Endothelial cell of umbilical vein (primary cell): ENCODE measurements at regions of chr22 and their contacts with region 1.

Region 1: GRCh38 chr22:35921777-35922176 is 106.8 kb downstream of the RBFOX2 start:
- DNase-seq: peak; percentile 90
- H3K4me3 ChIP-seq: no peak overlapping the region
- H3K27ac ChIP-seq: peak overlapping the region; percentile 35
- H3K4me1 ChIP-seq: peaks cover 10% of the 10 kb centered on the region
- H3K27me3 ChIP-seq: no peaks in the 10 kb centered on the region
- CTCF ChIP-seq: peak; percentile 48 to 53
- POLR2A ChIP-seq: no peak

Region 2: DNA sequence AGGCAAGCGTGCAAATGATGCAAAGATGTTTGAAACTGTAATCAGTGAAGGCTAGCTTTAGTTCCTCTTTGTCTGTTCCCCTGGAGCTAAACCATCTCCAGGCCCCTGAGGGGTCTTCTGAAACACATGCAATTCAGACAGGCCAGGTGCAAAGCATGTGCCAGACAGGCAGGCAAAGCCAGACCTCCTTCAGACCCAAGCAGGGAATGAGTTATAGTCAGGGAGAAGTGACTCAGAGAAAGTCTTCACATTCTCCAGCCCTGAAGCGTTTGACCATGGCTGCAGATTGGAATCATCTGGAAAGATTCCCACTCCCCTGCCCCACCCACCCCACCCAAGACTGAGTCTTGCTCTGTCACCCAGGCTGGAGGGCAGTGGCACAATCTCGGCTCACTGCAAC is 1042.8 kb before region 1 on chr22:
- CTCF ChIA-PET with region 1: no interaction called
- POLR2A ChIA-PET with region 1: no interaction called
- dilution Hi-C with region 1: no loop called
- intact Hi-C with region 1: no loop called
- DNase-seq: no peak
- H3K4me3 ChIP-seq: no peak overlapping the region
- H3K27ac ChIP-seq: no peak overlapping the region
- H3K4me1 ChIP-seq: no peaks in the 10 kb centered on the region
- H3K27me3 ChIP-seq: no peaks in the 10 kb centered on the region
- CTCF ChIP-seq: no peak
- POLR2A ChIP-seq: no peak

Region 3: DNA sequence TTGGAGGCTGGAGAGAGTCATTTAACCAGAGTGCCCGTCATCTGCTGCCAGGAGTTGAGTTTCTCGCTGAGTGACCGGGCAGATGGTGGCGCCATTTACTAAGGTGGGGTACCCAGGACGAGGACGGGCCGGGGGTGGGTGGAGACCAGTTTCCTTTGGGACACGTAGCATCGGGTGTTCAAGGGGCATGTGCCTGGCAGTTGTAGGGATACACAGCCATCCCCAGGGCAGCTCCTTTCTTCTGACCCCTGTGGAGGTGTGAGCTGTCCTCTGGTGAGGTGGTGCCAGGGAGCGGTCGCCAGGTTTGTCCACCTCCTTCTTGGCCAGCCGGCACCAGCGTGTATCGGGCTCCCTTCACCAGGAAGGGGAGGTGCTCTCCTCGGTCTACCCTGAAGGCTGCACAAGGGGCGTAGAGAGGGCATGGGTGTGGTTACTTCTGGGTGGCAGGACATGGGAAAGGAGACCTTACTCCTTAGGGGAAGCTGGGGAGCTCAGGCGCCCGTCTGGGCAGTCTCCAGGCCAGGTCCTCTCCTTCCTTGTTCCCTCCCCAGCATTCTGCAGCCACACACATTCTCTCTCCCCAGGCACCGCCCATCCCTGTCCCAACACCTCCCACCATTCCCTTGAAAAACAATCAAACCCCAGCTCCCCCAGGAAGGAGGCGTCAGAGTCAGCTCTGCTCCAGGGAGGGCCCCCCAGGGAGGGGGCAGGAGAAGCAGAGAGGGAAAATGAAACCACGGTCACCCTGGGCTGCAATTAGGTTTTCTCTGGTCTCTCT is 294.3 kb before region 1 on chr22:
- CTCF ChIA-PET with region 1: interaction called, 5 read pairs
- POLR2A ChIA-PET with region 1: no interaction called
- dilution Hi-C with region 1: no loop called
- intact Hi-C with region 1: loop called (anchors 1 kb)
- DNase-seq: peak; percentile 76
- H3K4me3 ChIP-seq: peak overlapping the region; percentile 27 to 58 (median 51)
- H3K27ac ChIP-seq: peak overlapping the region; percentile 30
- H3K4me1 ChIP-seq: peaks cover 8% of the 10 kb centered on the region
- H3K27me3 ChIP-seq: no peaks in the 10 kb centered on the region
- CTCF ChIP-seq: peak; percentile 48 to 54
- POLR2A ChIP-seq: peak; percentile 21

Region 4: GRCh38 chr22:35684270-35684700 is 237.5 kb before region 1 on chr22:
- CTCF ChIA-PET with region 1: interaction called, 11 read pairs
- POLR2A ChIA-PET with region 1: no interaction called
- dilution Hi-C with region 1: no loop called
- intact Hi-C with region 1: no loop called
- DNase-seq: peak; percentile 34
- H3K4me3 ChIP-seq: no peak overlapping the region
- H3K27ac ChIP-seq: no peak overlapping the region
- H3K4me1 ChIP-seq: no peaks in the 10 kb centered on the region
- H3K27me3 ChIP-seq: peaks cover 2 to 7% of the 10 kb centered on the region in 2 experiments
- CTCF ChIP-seq: peak; percentile 14 to 32
- POLR2A ChIP-seq: no peak

Region 5: GRCh38 chr22:35766654-35767580 is 154.9 kb before region 1 on chr22:
- CTCF ChIA-PET with region 1: interaction called, 7 read pairs
- POLR2A ChIA-PET with region 1: no interaction called
- dilution Hi-C with region 1: no loop called
- intact Hi-C with region 1: loop called (anchors 5 kb)
- DNase-seq: peak; percentile 73
- H3K4me3 ChIP-seq: peak overlapping the region in 2 of 3 experiments; percentile 3 to 47
- H3K27ac ChIP-seq: peak overlapping the region; percentile 58
- H3K4me1 ChIP-seq: peaks cover 18% of the 10 kb centered on the region
- H3K27me3 ChIP-seq: no peaks in the 10 kb centered on the region
- CTCF ChIP-seq: no peak
- POLR2A ChIP-seq: no peak

Region 6: DNA sequence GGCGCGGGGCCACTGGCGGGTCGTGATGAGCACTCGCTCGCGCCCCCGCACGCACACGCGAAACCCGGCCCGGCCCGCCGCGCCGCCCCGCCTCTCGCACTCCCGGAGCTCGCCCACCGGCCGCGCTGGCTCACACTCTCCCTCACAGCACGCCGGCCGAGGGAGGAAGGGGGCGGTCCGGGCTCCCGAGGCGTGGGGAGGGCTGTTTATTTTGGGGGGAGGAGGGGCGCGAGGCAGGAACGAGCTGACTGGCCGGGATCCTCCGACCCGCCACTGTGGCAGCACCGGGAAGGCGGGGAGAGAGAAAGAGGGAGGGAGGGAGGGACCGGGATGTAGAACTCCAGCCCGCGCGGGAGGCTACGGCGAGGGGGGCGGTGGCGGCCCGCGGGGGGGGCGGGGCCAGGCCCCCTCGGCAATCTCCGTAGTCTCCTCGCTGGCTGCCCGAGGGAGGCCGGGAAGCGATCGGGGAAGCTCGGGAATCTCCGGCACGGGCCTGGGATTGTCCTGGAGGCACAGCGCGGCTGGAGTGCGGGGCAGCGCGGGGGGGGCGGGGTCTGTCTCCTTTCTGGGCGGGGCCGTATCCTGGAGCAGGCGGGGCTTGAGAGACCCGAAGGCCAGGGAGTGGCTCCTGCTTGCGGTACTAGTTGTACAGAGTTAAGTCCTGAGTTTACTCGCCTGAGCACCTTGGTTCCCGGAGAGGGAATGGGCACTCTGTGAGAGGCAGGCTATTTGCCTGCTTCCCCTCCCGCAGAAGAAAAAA is 107.0 kb after region 1 on chr22 and contains the start of gene RBFOX2:
- CTCF ChIA-PET with region 1: no interaction called
- POLR2A ChIA-PET with region 1: no interaction called
- dilution Hi-C with region 1: no loop called
- intact Hi-C with region 1: no loop called
- DNase-seq: peak; percentile 97
- H3K4me3 ChIP-seq: peak within 1 kb of the TSS; percentile 60 to 80 (median 74)
- H3K27ac ChIP-seq: peak within 1 kb of the TSS; percentile 53
- H3K4me1 ChIP-seq: peaks cover 21% of the 10 kb centered on the region
- H3K27me3 ChIP-seq: no peaks in the 10 kb centered on the region
- CTCF ChIP-seq: no peak
- POLR2A ChIP-seq: peak; percentile 11
- total RNA-seq, gene RBFOX2: 125 and 129 TPM in 2 replicates